Sciatic nerve (tissue), 2 donors: ENCODE measurements at regions of chr6 and their contacts with region 1.

Region 1: GRCh38 chr6:85642774-85643536 is at the start of gene SYNCRIP:
- DNase-seq: peak; percentile 99
- ATAC-seq: peak; percentile 95
- total RNA-seq, gene SYNCRIP: 96.3 TPM

Region 2: GRCh38 chr6:85593438-85594196 is 49.3 kb before region 1 on chr6 and contains the start of gene SNX14:
- intact Hi-C with region 1: loop called (anchors 2 kb)
- DNase-seq: peak; percentile 98
- ATAC-seq: peak; percentile 98
- total RNA-seq, gene SNX14: 92.9 TPM

Region 3: GRCh38 chr6:85678602-85679444 is 35.9 kb after region 1 on chr6:
- intact Hi-C with region 1: loop called (anchors 5 kb)
- DNase-seq: peak; percentile 99
- ATAC-seq: peak; percentile 99